Right lobe of liver (tissue), 6 donors: ENCODE measurements at regions of chr18 and their contacts with region 1.

Region 1: DNA sequence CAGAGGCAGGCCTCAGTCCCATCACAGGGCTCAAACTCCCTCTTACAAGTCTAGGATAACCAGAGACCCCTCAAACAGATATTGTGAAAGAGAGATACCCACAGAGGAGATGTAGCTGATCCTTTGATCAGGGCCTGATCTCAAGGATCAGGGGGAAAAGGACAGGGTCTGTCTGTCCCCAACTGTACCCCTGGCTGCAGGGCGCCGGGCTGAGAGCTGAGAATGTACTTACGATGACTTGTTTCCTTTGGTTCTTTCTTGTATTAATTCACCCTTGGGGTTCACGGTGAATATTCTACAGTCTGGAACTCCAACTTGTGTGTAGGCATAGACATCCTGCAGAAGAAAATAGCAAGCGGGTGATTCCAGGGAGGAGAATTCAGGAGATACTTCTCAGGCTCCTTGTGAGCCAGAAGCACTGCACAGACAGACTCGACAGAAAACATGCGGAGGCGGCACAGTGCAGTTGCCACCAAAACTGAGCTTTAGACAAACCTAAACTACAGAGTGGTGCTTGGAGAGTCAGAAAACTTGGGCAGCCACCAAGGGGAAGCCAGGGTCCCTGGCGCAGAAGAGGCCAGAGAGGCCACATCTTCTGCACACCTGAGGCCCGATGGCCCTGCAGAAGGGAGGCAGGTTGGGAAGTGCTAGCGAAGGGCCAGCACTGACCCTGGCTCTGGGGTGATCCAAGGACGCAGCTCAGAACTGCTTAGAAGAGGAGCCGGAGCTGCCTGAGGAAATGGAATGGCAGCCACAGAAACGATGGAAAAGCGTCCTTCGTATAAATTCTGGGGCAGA is 73.9 kb downstream of the EMILIN2 start:
- DNase-seq: peak in 1 of 3 donors; percentile 36
- ATAC-seq: no peak
- H3K4me3 ChIP-seq: no peak overlapping the region
- H3K27ac ChIP-seq: no peak overlapping the region
- H3K4me1 ChIP-seq: no peaks in the 10 kb centered on the region
- H3K27me3 ChIP-seq: no peaks in the 10 kb centered on the region
- CTCF ChIP-seq: no peak
- POLR2A ChIP-seq: no peak

Region 2: GRCh38 chr18:2826581-2826980 is 94.2 kb before region 1 on chr18:
- intact Hi-C with region 1: no loop called
- DNase-seq: no peak
- ATAC-seq: peak; percentile 19 to 56 (median 36)
- H3K4me3 ChIP-seq: no peak overlapping the region
- H3K27ac ChIP-seq: no peak overlapping the region
- H3K4me1 ChIP-seq: no peaks in the 10 kb centered on the region
- H3K27me3 ChIP-seq: no peaks in the 10 kb centered on the region
- CTCF ChIP-seq: no peak
- POLR2A ChIP-seq: no peak

Region 3: GRCh38 chr18:3074087-3074486 is 153.3 kb after region 1 on chr18:
- intact Hi-C with region 1: loop called in 1 of 2 experiments (anchors 10 kb)
- DNase-seq: no peak
- ATAC-seq: peak; percentile 34 to 86 (median 63)
- H3K4me3 ChIP-seq: no peak overlapping the region
- H3K27ac ChIP-seq: no peak overlapping the region
- H3K4me1 ChIP-seq: no peaks in the 10 kb centered on the region
- H3K27me3 ChIP-seq: no peaks in the 10 kb centered on the region
- CTCF ChIP-seq: no peak
- POLR2A ChIP-seq: no peak